ENCODE measurements at regions of chr19 and their contacts with region 1.

Region 1: DNA sequence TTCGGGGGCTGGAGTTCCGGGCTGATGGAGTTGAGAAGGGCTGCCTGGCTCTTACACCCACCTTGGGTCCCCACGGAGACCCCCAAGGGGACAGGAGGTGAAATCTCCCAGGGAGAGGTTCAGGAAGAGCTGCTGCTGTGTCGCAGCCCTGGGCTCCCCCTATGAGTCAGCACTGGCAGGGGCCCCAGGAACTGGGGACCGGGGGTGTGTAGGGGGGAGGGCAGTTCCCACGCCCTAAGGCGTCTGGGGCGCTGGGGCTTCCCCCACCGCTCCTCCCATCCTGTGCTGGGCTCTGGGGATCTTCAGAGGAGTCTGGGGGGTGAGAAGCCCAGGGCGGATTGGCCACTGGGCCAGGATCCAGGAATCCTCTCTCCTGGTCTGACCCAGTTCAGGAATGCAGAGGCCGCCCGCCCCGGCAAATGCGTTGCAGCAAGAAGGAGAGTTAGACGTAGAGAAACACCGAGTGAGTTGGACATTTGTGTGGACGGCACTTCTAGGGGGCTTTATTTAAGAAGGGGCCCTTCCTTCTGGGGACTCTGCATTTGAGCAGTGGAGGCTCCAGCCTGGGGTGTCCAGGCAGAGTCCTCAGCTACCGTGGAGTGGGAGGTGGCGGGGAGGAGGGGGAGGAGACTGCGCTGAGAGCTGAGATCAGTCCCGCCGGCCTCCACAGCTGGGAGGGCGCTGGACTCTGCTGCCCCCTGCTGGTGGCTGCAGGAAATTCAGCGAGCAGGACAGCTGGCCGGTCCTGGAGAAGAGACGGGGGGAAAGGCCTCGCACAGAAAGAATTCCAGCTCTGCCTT is 15.0 kb upstream of the NANOS3 start:
- DNase-seq: no peak
- ATAC-seq: peak; percentile 91
- H3K4me3 ChIP-seq: peak overlapping the region; percentile 31 to 50
- H3K27ac ChIP-seq: peak overlapping the region; percentile 91
- H3K4me1 ChIP-seq: peaks cover 12% of the 10 kb centered on the region
- H3K27me3 ChIP-seq: no peaks in the 10 kb centered on the region
- CTCF ChIP-seq: peak; percentile 94

Region 2: DNA sequence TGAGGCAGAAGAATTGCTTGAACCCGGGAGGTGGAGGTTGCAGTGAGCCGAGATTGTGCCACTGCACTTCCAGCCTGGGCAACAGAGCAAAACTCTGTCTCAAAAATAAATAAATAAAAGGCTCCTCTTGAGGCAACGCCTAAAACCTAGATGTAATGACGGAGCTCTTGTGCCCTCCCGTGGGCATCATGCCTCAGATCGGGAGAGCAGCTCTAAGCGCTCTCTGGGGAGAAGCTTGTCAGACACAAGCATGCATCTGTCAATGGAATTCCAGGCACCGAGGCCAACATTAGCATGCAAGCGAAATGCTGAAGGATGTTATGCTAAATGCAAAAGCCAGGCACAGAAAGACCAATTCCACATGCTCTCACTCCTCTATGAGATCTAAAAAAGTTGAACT is 143.2 kb before region 1 on chr19:
- CTCF ChIA-PET with region 1: interaction called, 10 read pairs
- POLR2A ChIA-PET with region 1: interaction called, 5 read pairs
- in situ Hi-C with region 1: no loop called
- intact Hi-C with region 1: no loop called
- DNase-seq: no peak
- ATAC-seq: peak; percentile 89
- H3K4me3 ChIP-seq: no peak overlapping the region
- H3K27ac ChIP-seq: peak overlapping the region; percentile 67
- H3K4me1 ChIP-seq: peaks cover 9% of the 10 kb centered on the region; the same call in 1 of the 2 replicates
- H3K27me3 ChIP-seq: no peaks in the 10 kb centered on the region
- CTCF ChIP-seq: peak; percentile 73

Region 3: DNA sequence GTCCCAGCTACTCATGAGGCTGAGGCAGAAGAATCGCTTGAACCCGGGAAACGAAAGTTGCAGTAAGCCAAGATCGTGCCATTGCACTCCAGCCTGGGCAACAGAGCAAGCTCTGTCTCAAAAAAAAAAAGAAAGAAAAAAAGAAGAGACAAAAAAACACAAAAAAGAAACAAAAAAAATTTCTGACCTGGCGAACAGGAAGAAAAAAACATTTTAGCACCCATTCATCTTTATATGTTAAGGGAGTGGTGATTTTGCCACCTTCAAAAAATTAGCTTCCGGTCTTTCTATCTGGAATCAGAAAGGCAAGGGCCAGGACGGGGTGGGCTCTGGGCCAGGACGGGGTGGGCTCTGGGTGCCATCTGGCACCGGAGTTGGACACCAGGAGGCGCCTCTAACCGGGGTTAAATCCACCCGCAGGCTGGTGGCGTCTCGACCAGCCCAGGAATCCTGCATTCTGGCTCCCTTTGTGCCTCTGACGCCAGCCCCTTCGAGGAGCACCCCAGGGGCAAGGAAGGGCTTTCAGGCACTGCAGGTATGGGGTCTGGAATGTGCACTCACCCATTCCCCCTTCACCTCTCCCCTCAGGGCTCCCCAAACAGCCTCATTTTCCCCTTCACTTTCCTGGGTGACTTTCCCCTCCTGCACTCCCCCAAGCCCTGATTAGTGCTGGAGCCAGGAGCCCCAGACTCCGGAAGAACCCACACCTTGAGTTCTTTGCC is 77.0 kb before region 1 on chr19:
- CTCF ChIA-PET with region 1: interaction called, 7 read pairs
- POLR2A ChIA-PET with region 1: interaction called, 7 read pairs
- in situ Hi-C with region 1: no loop called
- intact Hi-C with region 1: loop called (anchors 5 kb)
- DNase-seq: no peak
- ATAC-seq: peak; percentile 86
- H3K4me3 ChIP-seq: no peak overlapping the region
- H3K27ac ChIP-seq: peak overlapping the region; percentile 69
- H3K4me1 ChIP-seq: peaks cover 10% of the 10 kb centered on the region
- H3K27me3 ChIP-seq: no peaks in the 10 kb centered on the region
- CTCF ChIP-seq: peak; percentile 83

Region 4: GRCh38 chr19:13796301-13797057 is 65.5 kb before region 1 on chr19:
- CTCF ChIA-PET with region 1: no interaction called
- POLR2A ChIA-PET with region 1: interaction called, 12 read pairs
- in situ Hi-C with region 1: no loop called
- intact Hi-C with region 1: no loop called
- DNase-seq: no peak
- ATAC-seq: peak; percentile 66
- H3K4me3 ChIP-seq: peak overlapping the region; percentile 68 to 74
- H3K27ac ChIP-seq: peak overlapping the region; percentile 83
- H3K4me1 ChIP-seq: peaks cover 17% of the 10 kb centered on the region
- H3K27me3 ChIP-seq: no peaks in the 10 kb centered on the region
- CTCF ChIP-seq: no peak

Region 5: DNA sequence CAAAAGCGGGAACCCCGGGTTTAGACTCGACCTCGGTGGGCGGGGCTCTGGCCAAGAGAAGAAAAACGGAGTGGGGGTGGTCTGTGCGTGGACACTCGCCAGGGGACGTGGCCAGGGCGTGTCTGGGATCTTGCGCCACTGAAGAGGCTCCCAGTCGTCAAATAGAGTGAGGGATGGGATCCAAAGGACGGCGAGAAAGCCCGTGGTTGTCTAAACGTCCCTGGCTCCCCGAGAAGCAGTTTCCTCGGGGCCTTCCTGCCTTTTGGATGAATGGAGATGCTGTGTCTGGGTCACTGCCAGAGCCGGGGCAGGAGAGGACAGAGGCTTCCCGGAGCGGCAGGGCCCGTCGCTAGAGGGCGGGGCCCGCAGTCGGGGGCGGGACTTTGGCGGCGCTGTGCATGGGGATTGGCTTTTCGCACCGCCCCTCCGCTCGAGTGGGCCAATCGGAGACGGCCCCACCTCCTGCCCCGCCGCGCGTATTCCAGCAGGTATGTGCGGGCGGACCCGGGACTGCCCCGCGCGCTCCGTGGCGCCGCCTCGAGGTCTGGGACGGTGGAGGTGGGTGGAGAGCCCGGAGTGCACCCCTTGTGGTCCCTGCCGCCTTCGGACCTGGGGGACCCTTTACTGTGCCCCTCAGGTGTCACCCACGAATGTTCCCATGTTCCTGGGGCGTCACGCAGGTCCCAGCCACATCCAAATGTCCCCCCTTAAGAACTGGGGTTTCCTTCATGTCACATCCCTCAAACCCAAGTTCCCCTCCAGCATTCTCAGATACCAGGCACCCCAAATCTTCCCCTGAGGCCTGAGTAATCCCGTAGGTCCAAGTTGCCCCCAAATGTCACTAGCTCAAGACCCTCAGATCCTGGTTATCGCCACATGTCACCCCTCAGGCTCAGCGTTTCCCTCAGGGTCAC is 28.3 kb before region 1 on chr19:
- CTCF ChIA-PET with region 1: interaction called, 13 read pairs
- POLR2A ChIA-PET with region 1: interaction called, 9 read pairs
- in situ Hi-C with region 1: no loop called
- intact Hi-C with region 1: loop called (anchors 2 kb)
- DNase-seq: no peak
- ATAC-seq: peak; percentile 76
- H3K4me3 ChIP-seq: peak overlapping the region in 1 of 2 experiments; percentile 29; a peak in 2 of 4 replicates
- H3K27ac ChIP-seq: peak overlapping the region; percentile 84
- H3K4me1 ChIP-seq: peaks cover 39% of the 10 kb centered on the region
- H3K27me3 ChIP-seq: no peaks in the 10 kb centered on the region
- CTCF ChIP-seq: peak; percentile 78

Region 6: GRCh38 chr19:14023404-14024235 is 161.7 kb after region 1 on chr19:
- CTCF ChIA-PET with region 1: interaction called, 13 read pairs
- POLR2A ChIA-PET with region 1: no interaction called
- in situ Hi-C with region 1: no loop called
- intact Hi-C with region 1: no loop called
- DNase-seq: no peak
- ATAC-seq: peak; percentile 86
- H3K4me3 ChIP-seq: no peak overlapping the region
- H3K27ac ChIP-seq: peak overlapping the region; percentile 49; the same call in 1 of the 2 replicates
- H3K4me1 ChIP-seq: peaks cover 3% of the 10 kb centered on the region; the same call in 1 of the 2 replicates
- H3K27me3 ChIP-seq: no peaks in the 10 kb centered on the region
- CTCF ChIP-seq: peak; percentile 74